Dendritic cell treated with granulocyte-macrophage colony-stimulating factor and Interleukin-4, amounts not matched to agents 40 ng/mL and 50 ng/mL, for 4 days (primary cell): ENCODE measurements at regions of chr13 and their contacts with region 1.

Region 1: DNA sequence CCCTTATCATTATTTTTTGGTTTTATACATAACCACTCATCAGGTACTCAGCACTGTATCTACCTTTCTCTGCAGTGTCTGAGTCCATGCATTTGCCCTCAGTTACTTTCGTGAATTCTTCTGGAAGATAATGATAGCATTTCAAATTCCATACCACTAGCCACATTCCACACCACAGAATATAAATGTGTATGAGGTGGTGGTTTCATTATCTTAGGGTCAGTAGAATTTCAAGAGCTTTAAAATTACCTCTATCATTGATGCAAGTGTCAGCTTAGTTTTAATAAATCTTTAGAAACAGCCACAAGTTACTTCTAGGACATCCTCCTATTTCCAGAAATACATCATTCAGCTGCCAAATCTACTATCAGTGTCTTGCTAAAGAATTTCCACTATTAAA is 1578.3 kb downstream of the OLFM4 start:
- H3K4me3 Mint-ChIP-seq: no peak overlapping the region
- H3K27ac Mint-ChIP-seq: no peak overlapping the region
- H3K4me1 Mint-ChIP-seq: no peaks in the 10 kb centered on the region
- H3K27me3 Mint-ChIP-seq: no peaks in the 10 kb centered on the region

Region 2: GRCh38 chr13:53946500-53946899 is 660.4 kb before region 1 on chr13:
- intact Hi-C with region 1: loop called (anchors 5 kb)
- H3K4me3 Mint-ChIP-seq: no peak overlapping the region
- H3K27ac Mint-ChIP-seq: no peak overlapping the region
- H3K4me1 Mint-ChIP-seq: no peaks in the 10 kb centered on the region
- H3K27me3 Mint-ChIP-seq: no peaks in the 10 kb centered on the region